ENCODE measurements at regions of chr3 and their contacts with region 1.

Region 1: GRCh38 chr3:146544002-146544928 is at the start of gene PLSCR1:
- DNase-seq: peak; percentile 89
- H3K4me3 Mint-ChIP-seq: peak within 1 kb of the TSS; percentile 86
- H3K27ac Mint-ChIP-seq: peak within 1 kb of the TSS; percentile 88
- H3K4me1 Mint-ChIP-seq: peaks cover 59% of the 10 kb centered on the region
- H3K27me3 Mint-ChIP-seq: no peaks in the 10 kb centered on the region
- total RNA-seq, gene PLSCR1: 65.8 to 69.0 TPM

Region 2: GRCh38 chr3:146160964-146161662 is 383.2 kb before region 1 on chr3 and contains the start of gene PLOD2:
- CTCF ChIA-PET with region 1: no interaction called
- POLR2A ChIA-PET with region 1: no interaction called
- intact Hi-C with region 1: loop called (anchors 5 kb)
- DNase-seq: peak; percentile 32
- H3K4me3 Mint-ChIP-seq: peak within 1 kb of the TSS; percentile 60
- H3K27ac Mint-ChIP-seq: no peak within 1 kb of the TSS
- H3K4me1 Mint-ChIP-seq: peaks cover 12% of the 10 kb centered on the region
- H3K27me3 Mint-ChIP-seq: peaks cover 36% of the 10 kb centered on the region
- total RNA-seq, gene PLOD2: 0.38 to 0.65 TPM

Region 3: DNA sequence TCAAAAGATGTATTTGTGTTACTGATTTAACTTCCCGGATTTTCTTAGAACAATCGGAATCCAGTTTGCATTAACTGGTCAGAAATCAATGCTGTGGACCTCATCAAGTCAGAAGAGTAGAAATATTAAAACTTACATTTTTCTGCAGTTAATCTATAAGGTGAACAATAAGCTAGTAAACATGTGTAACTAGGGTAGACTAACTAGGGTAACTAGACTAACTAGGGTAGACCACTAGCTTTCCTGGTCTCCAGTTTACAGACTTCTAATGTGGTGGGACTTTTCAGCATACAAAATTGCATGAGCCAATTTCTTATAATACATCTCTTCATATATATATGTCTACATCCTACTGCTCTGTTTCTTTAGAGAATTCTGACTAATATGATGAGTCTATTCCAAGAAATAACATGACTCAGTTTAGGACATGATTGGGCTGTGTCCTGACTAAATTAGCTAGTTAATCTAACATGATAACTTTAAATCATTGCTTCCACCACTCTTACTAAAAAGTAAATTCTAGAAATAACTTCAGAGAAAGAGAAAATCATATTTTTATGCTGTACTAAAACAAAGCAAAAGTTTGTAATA is 80.2 kb before region 1 on chr3:
- CTCF ChIA-PET with region 1: no interaction called
- POLR2A ChIA-PET with region 1: no interaction called
- intact Hi-C with region 1: loop called (anchors 1 kb)
- DNase-seq: no peak
- H3K4me3 Mint-ChIP-seq: no peak overlapping the region
- H3K27ac Mint-ChIP-seq: no peak overlapping the region
- H3K4me1 Mint-ChIP-seq: peaks cover 11% of the 10 kb centered on the region
- H3K27me3 Mint-ChIP-seq: no peaks in the 10 kb centered on the region

Region 4: DNA sequence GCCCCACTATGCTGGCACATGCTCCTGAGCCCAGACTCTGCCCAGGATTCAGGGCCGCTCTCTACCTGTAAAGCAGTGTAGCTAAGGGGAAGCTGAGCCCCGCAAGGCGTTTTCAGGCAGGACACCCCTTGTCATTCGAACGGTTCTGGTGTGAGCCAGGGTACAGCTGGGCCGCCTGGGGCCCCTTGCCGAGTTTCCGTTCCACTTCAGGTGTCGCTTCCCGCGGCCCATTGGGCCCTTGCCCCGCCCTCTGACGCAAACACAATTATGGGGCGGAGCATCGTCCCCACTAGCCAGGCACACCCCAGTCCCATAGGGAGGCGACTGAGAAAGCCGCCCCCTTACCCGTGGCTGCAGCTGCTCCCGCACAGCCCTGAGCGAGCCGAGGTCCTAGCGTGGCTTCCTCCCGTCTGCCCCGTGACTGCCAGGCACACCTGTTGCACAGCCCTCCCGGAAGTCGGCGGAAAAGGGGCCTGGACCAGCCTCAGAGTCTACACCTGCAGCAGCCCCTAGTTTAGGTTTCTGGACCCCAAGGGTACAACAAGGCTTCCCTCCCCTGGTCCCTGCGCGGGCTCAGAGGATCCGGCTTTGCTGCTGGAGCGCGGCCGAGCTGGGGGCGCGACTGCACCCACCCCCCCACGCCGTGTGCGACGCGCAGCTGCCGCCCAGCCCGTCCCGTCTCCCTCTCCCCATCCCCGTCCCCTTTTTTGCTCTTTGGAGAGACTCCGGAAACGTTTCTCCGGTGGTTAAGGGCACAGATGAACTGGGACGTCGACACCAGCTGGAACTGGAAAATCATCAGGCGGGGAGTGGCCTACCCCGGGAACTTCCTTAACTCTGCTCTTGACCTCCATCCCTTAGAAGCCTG is 74.9 kb before region 1 on chr3 and contains the start of gene PLSCR2:
- CTCF ChIA-PET with region 1: no interaction called
- POLR2A ChIA-PET with region 1: no interaction called
- intact Hi-C with region 1: loop called (anchors 1 kb)
- DNase-seq: peak; percentile 81
- H3K4me3 Mint-ChIP-seq: peak within 1 kb of the TSS; percentile 71
- H3K27ac Mint-ChIP-seq: peak within 1 kb of the TSS; percentile 28
- H3K4me1 Mint-ChIP-seq: peaks cover 3% of the 10 kb centered on the region
- H3K27me3 Mint-ChIP-seq: no peaks in the 10 kb centered on the region
- total RNA-seq, gene PLSCR2: not detected

Region 5: GRCh38 chr3:146503461-146504202 is 40.6 kb before region 1 on chr3:
- CTCF ChIA-PET with region 1: no interaction called
- POLR2A ChIA-PET with region 1: no interaction called
- intact Hi-C with region 1: loop called (anchors 2 kb)
- DNase-seq: peak; percentile 51
- H3K4me3 Mint-ChIP-seq: no peak overlapping the region
- H3K27ac Mint-ChIP-seq: no peak overlapping the region
- H3K4me1 Mint-ChIP-seq: peaks cover 16% of the 10 kb centered on the region
- H3K27me3 Mint-ChIP-seq: no peaks in the 10 kb centered on the region